CD8-positive, alpha-beta T cell (primary cell): ENCODE measurements at regions of chr6 and their contacts with region 1.

Region 1: DNA sequence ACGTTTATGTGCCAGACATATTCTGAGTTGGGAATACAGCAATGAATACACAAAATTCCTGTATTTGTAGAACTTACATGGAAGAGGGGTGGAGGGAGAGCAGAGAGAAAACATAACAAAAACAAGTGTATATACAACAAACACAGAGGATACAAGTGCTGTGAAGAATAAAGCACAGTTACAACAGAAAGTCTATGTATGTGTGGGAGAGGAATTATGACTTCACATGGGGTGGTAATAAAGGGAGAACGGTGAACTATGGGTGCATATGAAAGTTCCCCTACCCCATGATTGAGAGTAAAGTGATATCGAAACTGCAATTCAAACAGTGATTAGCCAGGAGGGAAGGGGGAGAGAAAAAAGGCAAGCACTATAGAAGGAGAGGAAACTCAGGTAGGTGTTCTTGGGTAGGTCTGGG is 24.6 kb downstream of the HBS1L start:
- DNase-seq: peak in 2 of 9 experiments; percentile 39 to 61
- ATAC-seq: peak; percentile 79
- H3K4me3 ChIP-seq: no peak overlapping the region
- H3K4me3 Mint-ChIP-seq: peak overlapping the region; percentile 47
- H3K27ac ChIP-seq: peak overlapping the region in 1 of 2 experiments; percentile 9
- H3K27ac Mint-ChIP-seq: peak overlapping the region; percentile 81
- H3K4me1 ChIP-seq: peaks cover 13% of the 10 kb centered on the region
- H3K4me1 Mint-ChIP-seq: peaks cover 70% of the 10 kb centered on the region
- H3K27me3 ChIP-seq: no peaks in the 10 kb centered on the region
- H3K27me3 Mint-ChIP-seq: no peaks in the 10 kb centered on the region
- CTCF ChIP-seq: no peak

Region 2: DNA sequence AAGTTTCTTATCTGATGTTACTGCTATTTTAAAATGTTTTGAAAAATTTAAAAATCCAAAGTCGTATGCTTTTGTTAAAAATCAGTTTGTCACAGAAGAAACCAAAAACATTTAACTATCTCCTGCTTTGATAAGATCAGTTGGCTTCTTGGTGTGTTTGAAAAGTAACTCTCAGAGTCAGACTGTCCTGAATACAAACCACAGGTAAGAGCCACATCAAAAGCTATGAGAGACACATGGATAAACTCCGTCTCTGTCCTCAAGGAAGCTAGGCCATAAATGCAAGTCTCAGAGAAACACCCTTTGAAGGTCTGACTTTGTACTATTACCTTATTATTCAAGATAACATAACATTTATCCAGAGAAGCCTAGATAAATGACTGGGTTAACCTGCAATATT is 16.8 kb after region 1 on chr6:
- CTCF ChIA-PET with region 1: no interaction called
- POLR2A ChIA-PET with region 1: no interaction called
- intact Hi-C with region 1: loop called in 1 of 2 experiments (anchors 2 kb)
- DNase-seq: peak in 1 of 9 experiments; percentile 21
- ATAC-seq: no peak
- H3K4me3 ChIP-seq: no peak overlapping the region
- H3K4me3 Mint-ChIP-seq: no peak overlapping the region
- H3K27ac ChIP-seq: no peak overlapping the region
- H3K27ac Mint-ChIP-seq: peak overlapping the region; percentile 37
- H3K4me1 ChIP-seq: peaks cover 40% of the 10 kb centered on the region
- H3K4me1 Mint-ChIP-seq: peaks cover 72% of the 10 kb centered on the region
- H3K27me3 ChIP-seq: no peaks in the 10 kb centered on the region
- H3K27me3 Mint-ChIP-seq: no peaks in the 10 kb centered on the region
- CTCF ChIP-seq: no peak